Activated T-helper 1 cell treated with anti-CD3 and anti-CD28 coated beads, Interleukin-12 subunit alpha, Interleukin-12 subunit beta, Interleukin-2, Interleukin-4 antibody, amounts not matched to agents 30 ng/mL and 10 ng/mL and 1 ng/mL, durations not matched to agents 14 hours and 24 hours and 36 hours (primary cell): ENCODE measurements at regions of chr21 and their contacts with region 1.

Region 1: GRCh38 chr21:39137248-39138178 is 45.7 kb downstream of the PSMG1 start:
- DNase-seq: no peak
- H3K4me3 Mint-ChIP-seq: no peak overlapping the region
- H3K27ac Mint-ChIP-seq: no peak overlapping the region
- H3K4me1 Mint-ChIP-seq: no peaks in the 10 kb centered on the region
- H3K27me3 Mint-ChIP-seq: peaks cover 2% of the 10 kb centered on the region

Region 2: DNA sequence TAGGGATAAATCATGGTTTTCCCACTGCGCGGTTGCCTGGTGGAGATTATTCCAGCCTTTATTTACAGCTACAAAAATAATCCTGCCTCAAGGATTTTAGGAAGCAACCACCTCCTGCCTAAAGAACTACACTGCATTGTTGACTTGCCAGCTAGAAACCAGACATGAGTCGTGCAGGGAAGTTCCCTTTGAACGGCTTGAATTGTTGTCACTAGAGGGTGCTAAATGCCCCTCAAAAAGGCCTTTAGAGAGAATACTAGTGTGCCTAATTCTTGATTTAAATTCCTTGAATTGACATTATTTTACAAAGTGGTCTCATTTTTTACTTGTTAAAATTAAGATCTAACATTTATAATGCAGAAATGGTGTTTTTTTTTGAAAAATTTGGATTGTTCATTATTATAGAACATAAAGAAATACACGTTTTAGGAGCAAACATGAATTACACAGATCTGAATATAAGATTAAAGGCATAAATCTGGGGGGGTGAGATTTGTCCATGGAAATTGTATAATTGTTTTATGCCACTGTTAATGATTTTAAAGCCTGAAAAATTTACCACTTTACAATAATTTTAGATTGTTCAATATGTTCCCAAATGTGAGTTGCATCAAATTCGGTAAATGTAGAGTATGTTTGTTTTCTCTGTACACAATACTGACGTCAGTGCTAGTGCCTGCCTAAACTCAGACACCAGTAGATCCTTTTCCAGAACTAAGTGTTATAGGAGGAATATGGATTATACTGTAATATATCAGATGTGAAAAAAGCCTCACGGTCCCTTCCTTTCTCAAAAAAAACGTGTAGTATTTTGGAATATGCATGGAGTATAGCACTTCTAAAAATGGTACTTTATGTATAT is 631.6 kb before region 1 on chr21:
- intact Hi-C with region 1: loop called (anchors 1 kb)
- DNase-seq: no peak
- H3K4me3 Mint-ChIP-seq: no peak overlapping the region
- H3K27ac Mint-ChIP-seq: peak overlapping the region; percentile 11
- H3K4me1 Mint-ChIP-seq: peaks cover 15% of the 10 kb centered on the region
- H3K27me3 Mint-ChIP-seq: peaks cover 10% of the 10 kb centered on the region

Region 3: GRCh38 chr21:38669176-38669575 is 468.3 kb before region 1 on chr21:
- intact Hi-C with region 1: loop called (anchors 1 kb)
- DNase-seq: no peak
- H3K4me3 Mint-ChIP-seq: no peak overlapping the region
- H3K27ac Mint-ChIP-seq: no peak overlapping the region
- H3K4me1 Mint-ChIP-seq: no peaks in the 10 kb centered on the region
- H3K27me3 Mint-ChIP-seq: peaks cover 15% of the 10 kb centered on the region

Region 4: GRCh38 chr21:38805328-38806152 is 332.0 kb before region 1 on chr21 and contains the start of gene ETS2:
- intact Hi-C with region 1: loop called (anchors 5 kb)
- DNase-seq: peak; percentile 72
- H3K4me3 Mint-ChIP-seq: peak within 1 kb of the TSS; percentile 92
- H3K27ac Mint-ChIP-seq: peak within 1 kb of the TSS; percentile 90
- H3K4me1 Mint-ChIP-seq: peaks cover 27% of the 10 kb centered on the region
- H3K27me3 Mint-ChIP-seq: peaks cover 7% of the 10 kb centered on the region
- total RNA-seq, gene ETS2: 22.9 and 25.8 TPM in 2 replicates

Region 5: GRCh38 chr21:38913120-38913892 is 224.2 kb before region 1 on chr21:
- intact Hi-C with region 1: loop called (anchors 5 kb)
- DNase-seq: no peak
- H3K4me3 Mint-ChIP-seq: no peak overlapping the region
- H3K27ac Mint-ChIP-seq: no peak overlapping the region
- H3K4me1 Mint-ChIP-seq: no peaks in the 10 kb centered on the region
- H3K27me3 Mint-ChIP-seq: peaks cover 4% of the 10 kb centered on the region